Cardiac septum (tissue), 1 donor: ENCODE measurements at regions of chr14 and their contacts with region 1.

Region 1: GRCh38 chr14:51651388-51652167 is at the start of gene FRMD6:
- DNase-seq: peak; percentile 91
- total RNA-seq, gene FRMD6: 9.1 TPM

Region 2: DNA sequence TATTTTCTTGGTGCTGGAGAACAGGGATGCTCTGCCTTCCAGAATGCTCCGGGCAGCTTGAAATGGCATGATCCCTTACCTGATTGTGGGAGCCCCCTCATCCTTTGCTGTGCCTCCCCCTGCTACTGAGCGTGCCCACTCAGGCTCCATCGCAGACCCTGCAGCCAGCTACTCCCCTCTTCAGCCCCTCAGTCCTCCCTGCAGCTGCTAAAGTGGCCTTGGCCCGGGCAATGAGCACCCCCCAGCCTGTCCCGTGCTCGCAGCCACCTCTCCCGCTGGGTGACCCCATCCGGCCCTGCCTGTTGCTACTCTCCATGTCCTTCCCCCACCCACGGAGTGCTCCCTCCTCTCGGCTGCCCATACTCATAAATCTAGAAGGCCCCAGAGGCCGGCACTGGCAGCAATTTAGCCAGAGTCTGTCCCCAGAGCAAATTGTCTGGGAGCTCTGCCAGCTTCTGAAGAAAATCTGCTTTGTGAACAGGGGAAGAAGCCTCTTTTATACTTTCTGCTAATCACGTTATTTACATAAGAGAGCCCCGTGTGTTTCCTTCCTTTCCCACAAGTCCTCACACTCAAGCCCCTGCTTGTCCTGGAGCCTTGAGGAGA is 143.6 kb before region 1 on chr14:
- intact Hi-C with region 1: no loop called
- DNase-seq: no peak

Region 3: DNA sequence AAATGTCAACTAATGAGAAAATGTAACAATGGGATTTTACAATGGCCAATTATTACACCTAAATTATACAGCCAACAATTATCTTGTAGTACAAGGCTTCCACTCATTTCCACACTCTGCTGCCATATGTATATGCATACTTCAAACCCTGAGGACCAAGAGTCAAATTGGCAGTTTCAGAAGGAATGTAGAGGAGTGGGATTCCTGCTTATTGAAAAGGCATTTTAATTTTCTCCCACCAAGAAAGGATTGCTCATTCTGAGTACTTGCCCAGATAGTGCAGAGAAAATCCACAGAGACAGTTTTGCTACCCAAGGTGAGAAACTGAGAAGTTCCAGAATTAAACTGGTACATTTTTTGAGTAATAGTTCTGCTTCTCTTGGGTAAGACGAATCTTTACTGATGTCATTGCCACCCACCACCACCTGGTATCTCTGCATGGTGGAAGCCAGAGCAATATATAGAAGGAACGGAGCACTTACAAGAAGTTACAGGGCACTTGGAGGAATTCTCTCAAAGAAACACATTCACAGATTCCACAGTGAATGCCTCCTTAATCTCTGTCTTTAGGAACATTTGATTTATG is 20.7 kb before region 1 on chr14:
- intact Hi-C with region 1: no loop called
- DNase-seq: no peak

Region 4: GRCh38 chr14:51776102-51776894 is 124.7 kb after region 1 on chr14:
- intact Hi-C with region 1: loop called (anchors 2 kb)
- DNase-seq: no peak

Region 5: DNA sequence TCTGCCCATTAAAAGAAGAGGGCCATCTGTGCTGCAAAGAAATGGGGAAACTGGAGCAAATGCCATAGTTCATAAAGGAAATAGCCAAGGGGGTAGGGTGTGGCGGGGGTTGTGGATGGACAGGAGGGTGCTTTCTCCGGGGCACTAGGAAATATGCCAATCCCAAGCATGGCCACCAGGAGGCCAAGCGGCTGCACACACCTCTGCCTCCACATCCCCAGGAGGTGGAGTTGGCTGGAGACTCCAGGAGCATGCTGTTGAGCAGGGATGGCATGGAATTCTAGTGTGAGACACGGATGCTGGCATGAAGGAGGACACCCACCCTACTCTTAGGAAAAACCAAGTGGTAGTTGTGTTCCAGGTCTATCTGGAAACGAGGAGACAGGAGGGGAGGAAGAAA is 392.1 kb after region 1 on chr14:
- intact Hi-C with region 1: no loop called
- DNase-seq: no peak